ENCODE measurements at regions of chr12 and their contacts with region 1.

Region 1: DNA sequence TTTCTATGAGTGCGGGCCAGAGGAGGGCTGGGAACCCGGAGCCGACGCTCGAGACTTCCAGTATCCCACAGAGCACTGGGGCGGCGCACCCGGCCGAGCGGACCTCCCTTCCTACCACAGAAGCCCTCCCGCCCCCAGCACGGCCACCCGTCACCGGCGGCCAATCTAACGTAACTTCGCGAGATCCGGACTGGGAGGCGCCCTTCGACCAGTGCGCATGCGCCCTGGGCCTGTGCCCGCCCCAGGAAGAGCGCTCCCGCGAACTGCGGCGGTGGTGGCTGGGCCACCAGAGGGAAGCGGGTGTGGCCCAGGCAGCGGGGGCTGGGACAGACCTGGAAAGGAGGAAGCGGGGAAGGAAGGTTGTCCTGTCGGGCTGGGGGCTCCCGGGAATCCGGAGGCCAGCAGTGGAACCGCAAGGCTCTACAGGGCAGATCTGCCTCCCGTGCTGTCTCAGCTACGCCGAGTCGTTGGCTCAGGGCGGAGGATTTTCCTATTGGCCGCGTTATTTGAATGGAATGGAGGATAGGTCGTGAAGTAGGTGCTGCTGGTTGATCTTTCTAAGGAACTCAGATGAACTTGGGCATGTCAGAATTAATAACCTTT is at the start of gene PPP1R12A:
- DNase-seq: peak; percentile 98
- H3K4me3 Mint-ChIP-seq: peak within 1 kb of the TSS; percentile 92
- H3K27ac Mint-ChIP-seq: peak within 1 kb of the TSS; percentile 96
- H3K4me1 Mint-ChIP-seq: peaks cover 13% of the 10 kb centered on the region
- H3K27me3 Mint-ChIP-seq: no peaks in the 10 kb centered on the region
- CTCF ChIP-seq: no peak
- total RNA-seq, gene PPP1R12A: 67.6 and 78.0 TPM in 2 replicates

Region 2: DNA sequence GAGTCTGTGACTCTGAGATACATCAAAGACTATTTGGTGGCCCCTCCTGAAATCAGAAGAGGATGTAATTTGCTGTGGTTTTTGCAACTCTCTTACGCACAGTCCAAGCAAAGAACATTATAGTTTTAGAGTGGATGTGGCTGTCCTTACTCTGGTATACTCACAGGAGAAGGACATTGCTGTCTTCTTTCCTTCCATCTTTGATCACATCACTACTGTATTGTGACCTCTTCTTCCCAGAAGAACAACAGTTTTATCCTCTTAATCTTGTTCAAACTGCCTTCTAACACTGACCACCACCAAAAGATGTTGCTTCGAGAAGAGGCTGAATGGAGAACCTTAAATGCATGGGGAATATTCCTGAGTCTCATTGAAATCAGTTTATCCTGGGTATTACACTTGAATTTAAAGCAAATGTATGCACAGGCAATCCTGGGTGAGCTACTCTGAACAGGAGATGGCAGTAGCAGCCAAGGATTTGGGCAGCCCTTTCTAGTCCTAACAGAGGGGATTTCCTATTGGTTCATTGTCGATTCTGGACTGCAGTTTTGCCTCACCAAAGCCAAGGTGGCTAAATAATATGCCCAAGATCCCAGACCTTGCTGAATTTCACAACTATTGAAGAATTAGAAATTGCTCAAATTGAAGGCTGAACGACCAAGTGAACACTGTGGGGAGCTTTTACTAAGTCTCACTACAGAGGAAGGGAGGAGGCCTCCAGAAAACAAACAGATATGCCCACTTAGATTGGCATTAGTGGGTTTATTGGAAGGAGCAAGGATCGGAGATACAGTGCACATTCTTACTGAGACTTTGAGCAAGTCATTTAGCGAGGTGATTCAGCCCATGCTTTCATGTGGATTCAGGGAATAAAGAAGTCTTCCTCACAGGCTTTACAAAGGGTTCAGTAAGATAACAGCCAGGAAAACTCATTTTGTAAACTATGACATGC is 527.2 kb before region 1 on chr12:
- CTCF ChIA-PET with region 1: no interaction called
- POLR2A ChIA-PET with region 1: interaction called, 4 read pairs
- intact Hi-C with region 1: loop called (anchors 5 kb)
- DNase-seq: peak; percentile 89
- H3K4me3 Mint-ChIP-seq: no peak overlapping the region
- H3K27ac Mint-ChIP-seq: peak overlapping the region; percentile 54
- H3K4me1 Mint-ChIP-seq: peaks cover 13% of the 10 kb centered on the region
- H3K27me3 Mint-ChIP-seq: no peaks in the 10 kb centered on the region
- CTCF ChIP-seq: peak; percentile 75

Region 3: GRCh38 chr12:79766705-79767464 is 168.2 kb before region 1 on chr12:
- CTCF ChIA-PET with region 1: interaction called, 5 read pairs
- POLR2A ChIA-PET with region 1: interaction called, 4 read pairs
- intact Hi-C with region 1: loop called (anchors 10 kb)
- DNase-seq: no peak
- H3K4me3 Mint-ChIP-seq: no peak overlapping the region
- H3K27ac Mint-ChIP-seq: no peak overlapping the region
- H3K4me1 Mint-ChIP-seq: peaks cover 6% of the 10 kb centered on the region
- H3K27me3 Mint-ChIP-seq: no peaks in the 10 kb centered on the region
- CTCF ChIP-seq: no peak

Region 4: DNA sequence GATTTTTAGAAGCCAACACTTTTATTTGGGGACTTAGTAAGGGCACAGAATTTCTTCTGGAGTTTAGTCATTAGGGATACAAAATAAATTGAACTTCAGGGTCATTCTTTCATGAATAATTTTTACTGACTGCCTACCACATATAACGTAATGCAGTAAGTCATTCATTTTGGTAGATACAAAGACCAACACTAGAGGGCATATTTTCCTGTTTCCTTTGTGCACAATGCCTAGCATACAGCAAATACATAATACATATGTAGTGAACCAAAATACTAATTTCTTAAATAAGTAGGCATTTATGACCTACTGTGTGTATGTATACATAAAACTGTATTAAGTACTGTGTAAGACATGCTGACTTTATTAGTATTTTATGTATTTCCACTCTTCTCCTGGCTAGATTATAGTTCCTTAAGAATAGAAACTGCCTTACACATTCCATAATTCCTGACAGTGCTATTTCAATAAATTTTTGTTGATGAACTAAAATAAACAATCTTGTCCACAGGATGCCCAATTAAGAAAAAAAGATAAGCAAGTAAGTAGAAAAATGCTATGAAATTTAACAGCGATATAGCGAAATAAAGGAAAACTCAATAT is 48.1 kb before region 1 on chr12:
- CTCF ChIA-PET with region 1: interaction called, 5 read pairs
- POLR2A ChIA-PET with region 1: interaction called, 5 read pairs
- intact Hi-C with region 1: loop called (anchors 1 kb)
- DNase-seq: peak; percentile 61
- H3K4me3 Mint-ChIP-seq: no peak overlapping the region
- H3K27ac Mint-ChIP-seq: no peak overlapping the region
- H3K4me1 Mint-ChIP-seq: peaks cover 23% of the 10 kb centered on the region
- H3K27me3 Mint-ChIP-seq: no peaks in the 10 kb centered on the region
- CTCF ChIP-seq: peak; percentile 39

Region 5: DNA sequence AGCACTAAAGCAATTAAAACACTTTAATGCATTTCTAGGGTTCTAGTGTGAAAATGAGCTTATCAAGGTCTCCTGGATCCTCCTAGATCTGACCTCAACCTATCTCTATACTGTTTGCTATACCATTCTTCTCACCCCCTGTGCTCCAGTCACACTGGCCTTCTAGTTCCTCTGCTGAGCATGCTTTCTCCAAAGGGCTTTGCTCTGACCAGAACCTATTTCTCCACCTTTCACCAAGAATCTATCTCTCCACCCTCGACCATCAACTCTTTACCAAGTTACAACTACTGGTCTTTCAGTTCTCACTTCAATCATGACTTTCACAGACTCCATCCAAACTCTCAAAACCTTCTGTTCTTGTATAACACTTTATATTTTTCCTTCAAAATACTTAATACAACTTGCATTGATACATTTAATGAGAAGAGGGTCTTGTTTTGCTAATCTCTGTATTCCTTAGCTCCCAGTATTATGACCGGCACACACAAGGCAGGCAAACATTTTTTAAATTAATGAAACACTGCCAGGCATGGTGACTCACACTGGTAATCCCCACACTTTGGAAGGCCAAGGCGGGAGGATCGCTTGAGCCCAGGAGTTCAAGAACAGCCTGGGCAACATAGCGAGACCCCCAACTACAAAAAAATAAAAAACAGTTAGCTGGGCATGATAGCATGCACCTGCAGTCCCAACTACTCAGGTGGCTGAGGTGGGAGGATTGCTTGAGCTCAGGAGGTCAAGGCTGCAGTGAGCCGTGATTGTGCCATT is 23.0 kb before region 1 on chr12:
- CTCF ChIA-PET with region 1: no interaction called
- POLR2A ChIA-PET with region 1: interaction called, 11 read pairs
- intact Hi-C with region 1: no loop called
- DNase-seq: peak; percentile 45
- H3K4me3 Mint-ChIP-seq: no peak overlapping the region
- H3K27ac Mint-ChIP-seq: peak overlapping the region; percentile 4
- H3K4me1 Mint-ChIP-seq: peaks cover 15% of the 10 kb centered on the region
- H3K27me3 Mint-ChIP-seq: no peaks in the 10 kb centered on the region
- CTCF ChIP-seq: no peak

Region 6: GRCh38 chr12:79956896-79957295 is 21.8 kb after region 1 on chr12:
- CTCF ChIA-PET with region 1: no interaction called
- POLR2A ChIA-PET with region 1: no interaction called
- intact Hi-C with region 1: no loop called
- DNase-seq: no peak
- H3K4me3 Mint-ChIP-seq: no peak overlapping the region
- H3K27ac Mint-ChIP-seq: no peak overlapping the region
- H3K4me1 Mint-ChIP-seq: no peaks in the 10 kb centered on the region
- H3K27me3 Mint-ChIP-seq: no peaks in the 10 kb centered on the region
- CTCF ChIP-seq: no peak

Region 7: DNA sequence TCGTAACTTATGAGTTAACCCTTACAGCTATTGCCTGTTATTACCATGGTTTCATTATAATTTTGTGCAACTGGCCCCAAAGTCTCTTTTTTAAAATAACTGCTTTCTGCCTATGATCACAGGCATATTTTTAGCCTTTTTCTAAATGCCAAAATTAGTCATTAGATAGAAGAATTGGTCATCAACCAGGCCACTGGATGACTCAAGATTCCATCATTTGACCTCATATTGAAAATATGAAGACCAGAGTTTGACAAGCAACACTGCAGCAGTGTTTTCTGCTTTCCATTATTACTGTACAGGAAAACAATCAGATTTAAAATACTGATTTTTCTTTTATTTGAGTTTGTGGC is 109.5 kb after region 1 on chr12:
- CTCF ChIA-PET with region 1: no interaction called
- POLR2A ChIA-PET with region 1: interaction called, 4 read pairs
- intact Hi-C with region 1: loop called (anchors 10 kb)
- DNase-seq: peak; percentile 45
- H3K4me3 Mint-ChIP-seq: no peak overlapping the region
- H3K27ac Mint-ChIP-seq: no peak overlapping the region
- H3K4me1 Mint-ChIP-seq: peaks cover 8% of the 10 kb centered on the region
- H3K27me3 Mint-ChIP-seq: no peaks in the 10 kb centered on the region
- CTCF ChIP-seq: no peak

Region 8: DNA sequence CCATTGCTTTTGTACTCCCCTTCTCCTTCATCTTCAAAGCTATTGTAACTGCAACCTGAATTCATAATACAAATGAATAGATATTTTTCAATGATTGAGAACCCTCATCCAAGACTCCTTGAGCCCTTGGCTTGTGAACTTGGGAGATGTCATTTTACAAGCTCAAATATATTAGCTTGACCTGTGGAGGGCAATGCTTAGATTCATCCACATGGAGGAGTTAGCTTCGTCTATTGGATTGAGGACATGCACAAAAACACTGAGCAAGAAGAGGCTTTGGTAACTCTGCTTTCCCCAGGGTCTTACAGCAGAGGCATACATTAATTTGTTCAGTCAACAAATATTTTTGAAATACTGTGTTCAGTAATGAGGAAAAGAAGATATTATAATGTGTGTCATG is 265.3 kb after region 1 on chr12:
- CTCF ChIA-PET with region 1: no interaction called
- POLR2A ChIA-PET with region 1: no interaction called
- intact Hi-C with region 1: no loop called
- DNase-seq: no peak
- H3K4me3 Mint-ChIP-seq: no peak overlapping the region
- H3K27ac Mint-ChIP-seq: no peak overlapping the region
- H3K4me1 Mint-ChIP-seq: no peaks in the 10 kb centered on the region
- H3K27me3 Mint-ChIP-seq: no peaks in the 10 kb centered on the region
- CTCF ChIP-seq: no peak

Measured in MCF 10A (cell line).